CD4-positive, alpha-beta memory T cell (primary cell): ENCODE measurements at regions of chr9 and their contacts with region 1.

Region 1: DNA sequence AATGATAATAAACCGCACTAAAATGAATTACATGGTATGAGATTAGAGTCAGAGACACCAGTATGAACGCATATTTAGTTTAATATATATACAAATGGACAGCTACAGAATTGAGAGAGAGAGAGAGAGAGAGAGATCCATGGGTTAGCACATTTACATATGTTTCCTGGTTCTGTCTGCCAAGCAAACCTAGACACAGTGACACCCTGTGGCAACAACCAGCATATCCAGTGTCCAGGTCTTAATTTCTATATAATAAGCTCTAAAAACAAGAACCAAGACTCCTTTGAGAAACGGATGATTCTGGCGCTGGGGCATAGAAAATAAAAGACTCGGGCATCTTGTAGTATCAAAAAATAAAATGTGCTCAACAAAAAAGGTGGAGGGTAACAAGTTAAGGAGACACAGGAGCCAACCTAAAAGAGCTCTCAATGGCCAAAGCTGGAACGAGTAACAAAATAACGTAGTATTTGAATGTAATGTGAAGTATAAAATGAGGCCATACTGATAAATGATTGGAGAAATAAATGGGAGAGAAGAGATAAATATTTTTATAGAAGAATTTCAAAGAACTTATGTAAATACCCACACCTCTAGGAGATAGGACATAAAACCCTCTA is 84.5 kb downstream of the RFX3 start:
- DNase-seq: peak; percentile 31 to 50 (median 44)
- H3K4me3 ChIP-seq: no peak overlapping the region
- H3K4me3 Mint-ChIP-seq: no peak overlapping the region
- H3K27ac ChIP-seq: no peak overlapping the region
- H3K27ac Mint-ChIP-seq: peak overlapping the region in 1 of 7 donors; percentile 62
- H3K4me1 ChIP-seq: no peaks in the 10 kb centered on the region
- H3K4me1 Mint-ChIP-seq: peaks cover 3 to 10% (median 6%) of the 10 kb centered on the region in 4 donors
- H3K27me3 ChIP-seq: no peaks in the 10 kb centered on the region
- H3K27me3 Mint-ChIP-seq: no peaks in the 10 kb centered on the region

Region 2: DNA sequence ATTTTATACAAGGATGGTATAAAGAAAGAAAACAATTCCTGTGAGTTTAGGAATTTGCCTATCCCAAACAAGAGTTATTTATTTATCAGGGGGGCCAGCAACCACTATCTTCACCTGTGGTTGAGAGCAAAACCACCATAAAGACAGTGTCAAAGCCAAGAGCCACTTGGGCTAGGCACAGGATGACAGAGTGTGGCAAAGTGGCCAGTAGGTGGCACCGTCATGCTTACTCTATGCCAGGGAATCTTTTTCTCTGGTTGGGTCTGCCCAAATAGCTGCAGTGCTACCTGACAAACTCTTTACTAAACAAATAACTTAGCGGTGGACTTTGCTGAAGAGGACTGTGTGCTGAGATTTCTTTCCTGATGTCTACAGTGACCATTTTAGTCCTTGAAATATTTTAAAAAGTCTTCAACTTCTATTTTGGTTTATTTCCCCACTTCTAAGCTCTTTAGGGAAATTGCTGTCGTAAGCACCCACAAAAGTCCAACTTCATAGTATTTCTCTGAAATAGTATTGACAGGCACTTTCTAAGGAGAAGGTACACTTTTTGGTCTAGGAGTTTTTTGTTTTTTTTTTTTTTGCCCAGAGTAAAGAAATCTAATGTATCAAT is 200.5 kb before region 1 on chr9:
- CTCF ChIA-PET with region 1: interaction called, 14 read pairs
- POLR2A ChIA-PET with region 1: no interaction called
- intact Hi-C with region 1: loop called (anchors 1 kb)
- DNase-seq: peak; percentile 38 to 53 (median 43)
- H3K4me3 ChIP-seq: no peak overlapping the region
- H3K4me3 Mint-ChIP-seq: no peak overlapping the region
- H3K27ac ChIP-seq: no peak overlapping the region
- H3K27ac Mint-ChIP-seq: no peak overlapping the region
- H3K4me1 ChIP-seq: no peaks in the 10 kb centered on the region
- H3K4me1 Mint-ChIP-seq: peaks cover 0 to 1% (median 0%) of the 10 kb centered on the region in 4 donors
- H3K27me3 ChIP-seq: no peaks in the 10 kb centered on the region
- H3K27me3 Mint-ChIP-seq: no peaks in the 10 kb centered on the region

Region 3: GRCh38 chr9:3331817-3332216 is 109.5 kb before region 1 on chr9:
- CTCF ChIA-PET with region 1: interaction called, 9 read pairs
- POLR2A ChIA-PET with region 1: no interaction called
- intact Hi-C with region 1: loop called (anchors 5 kb)
- DNase-seq: no peak
- H3K4me3 ChIP-seq: no peak overlapping the region
- H3K4me3 Mint-ChIP-seq: no peak overlapping the region
- H3K27ac ChIP-seq: no peak overlapping the region
- H3K27ac Mint-ChIP-seq: no peak overlapping the region
- H3K4me1 ChIP-seq: no peaks in the 10 kb centered on the region
- H3K4me1 Mint-ChIP-seq: peaks cover 0 to 2% (median under 1%) of the 10 kb centered on the region in 4 donors
- H3K27me3 ChIP-seq: no peaks in the 10 kb centered on the region
- H3K27me3 Mint-ChIP-seq: no peaks in the 10 kb centered on the region

Region 4: DNA sequence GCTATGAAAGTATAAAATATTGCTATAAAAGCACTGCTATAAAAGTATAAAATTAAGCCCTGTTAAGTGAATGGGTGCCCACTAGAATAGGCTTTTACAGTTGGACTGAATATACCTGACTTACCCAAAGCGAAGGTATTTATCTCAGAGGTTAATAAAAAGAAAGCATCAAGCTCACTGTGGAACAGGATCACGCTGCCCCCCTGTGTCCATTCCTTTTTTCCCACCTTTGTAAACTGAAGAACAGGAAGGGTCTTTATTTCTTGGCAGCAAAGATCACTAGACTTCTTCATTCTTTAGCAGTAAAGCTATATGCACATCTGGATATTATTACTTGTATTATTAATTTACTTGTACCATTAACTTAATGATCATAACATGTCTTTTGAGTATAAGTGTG is 1198.7 kb after region 1 on chr9:
- CTCF ChIA-PET with region 1: no interaction called
- POLR2A ChIA-PET with region 1: no interaction called
- intact Hi-C with region 1: no loop called
- DNase-seq: peak; percentile 53 to 64 (median 54)
- H3K4me3 ChIP-seq: no peak overlapping the region
- H3K4me3 Mint-ChIP-seq: no peak overlapping the region
- H3K27ac ChIP-seq: no peak overlapping the region
- H3K27ac Mint-ChIP-seq: no peak overlapping the region
- H3K4me1 ChIP-seq: no peaks in the 10 kb centered on the region
- H3K4me1 Mint-ChIP-seq: peaks cover 5 to 11% (median 8%) of the 10 kb centered on the region in 4 donors
- H3K27me3 ChIP-seq: no peaks in the 10 kb centered on the region
- H3K27me3 Mint-ChIP-seq: no peaks in the 10 kb centered on the region